Vagina (tissue), 2 donors: ENCODE measurements at regions of chr7 and their contacts with region 1.

Region 1: DNA sequence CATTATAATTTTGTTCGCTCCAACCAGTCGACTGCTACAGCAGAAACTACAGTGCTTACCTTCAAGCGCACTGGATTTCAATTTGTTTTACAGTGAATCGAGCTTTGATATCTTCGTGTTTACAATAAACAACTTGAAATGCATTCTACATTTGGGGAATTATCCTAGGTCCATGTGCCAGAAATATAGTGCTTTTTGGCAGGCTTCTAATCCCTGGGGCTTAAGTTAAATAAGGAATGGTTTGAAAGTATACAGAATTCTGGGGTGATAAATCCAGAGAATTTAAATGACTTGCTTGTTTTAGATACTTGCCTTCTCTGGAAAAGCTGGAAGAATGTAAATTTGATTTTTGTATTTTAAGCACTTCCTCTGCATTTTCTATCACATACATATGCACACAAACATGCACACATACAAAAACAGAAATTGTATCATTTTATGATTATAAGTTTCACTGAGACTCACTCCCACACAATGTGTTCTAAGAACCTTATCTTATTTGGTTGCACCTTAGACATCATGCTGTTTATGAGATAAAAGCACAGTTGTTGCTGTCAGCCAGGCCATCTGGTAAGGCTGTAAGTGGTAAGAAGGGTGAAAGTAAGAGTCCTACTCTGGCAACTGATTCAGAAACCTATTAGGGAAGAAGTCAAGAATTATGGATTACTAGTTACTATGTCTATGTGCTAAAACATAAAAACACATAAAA is 347.2 kb upstream of the KCND2 start:
- DNase-seq: no peak
- H3K4me3 ChIP-seq: no peak overlapping the region
- H3K27ac ChIP-seq: no peak overlapping the region
- H3K4me1 ChIP-seq: no peaks in the 10 kb centered on the region
- H3K27me3 ChIP-seq: no peaks in the 10 kb centered on the region
- CTCF ChIP-seq: no peak
- POLR2A ChIP-seq: no peak

Region 2: GRCh38 chr7:120272261-120272660 is 346.5 kb after region 1 on chr7:
- intact Hi-C with region 1: loop called (anchors 10 kb)
- DNase-seq: no peak
- H3K4me3 ChIP-seq: peak overlapping the region; percentile 52 to 65
- H3K27ac ChIP-seq: peak overlapping the region; percentile 60
- H3K4me1 ChIP-seq: no peaks in the 10 kb centered on the region
- H3K27me3 ChIP-seq: no peaks in the 10 kb centered on the region
- CTCF ChIP-seq: peak in 2 of 3 experiments; percentile 28 to 46
- POLR2A ChIP-seq: no peak